ENCODE measurements at regions of chr5 and their contacts with region 1.

Region 1: DNA sequence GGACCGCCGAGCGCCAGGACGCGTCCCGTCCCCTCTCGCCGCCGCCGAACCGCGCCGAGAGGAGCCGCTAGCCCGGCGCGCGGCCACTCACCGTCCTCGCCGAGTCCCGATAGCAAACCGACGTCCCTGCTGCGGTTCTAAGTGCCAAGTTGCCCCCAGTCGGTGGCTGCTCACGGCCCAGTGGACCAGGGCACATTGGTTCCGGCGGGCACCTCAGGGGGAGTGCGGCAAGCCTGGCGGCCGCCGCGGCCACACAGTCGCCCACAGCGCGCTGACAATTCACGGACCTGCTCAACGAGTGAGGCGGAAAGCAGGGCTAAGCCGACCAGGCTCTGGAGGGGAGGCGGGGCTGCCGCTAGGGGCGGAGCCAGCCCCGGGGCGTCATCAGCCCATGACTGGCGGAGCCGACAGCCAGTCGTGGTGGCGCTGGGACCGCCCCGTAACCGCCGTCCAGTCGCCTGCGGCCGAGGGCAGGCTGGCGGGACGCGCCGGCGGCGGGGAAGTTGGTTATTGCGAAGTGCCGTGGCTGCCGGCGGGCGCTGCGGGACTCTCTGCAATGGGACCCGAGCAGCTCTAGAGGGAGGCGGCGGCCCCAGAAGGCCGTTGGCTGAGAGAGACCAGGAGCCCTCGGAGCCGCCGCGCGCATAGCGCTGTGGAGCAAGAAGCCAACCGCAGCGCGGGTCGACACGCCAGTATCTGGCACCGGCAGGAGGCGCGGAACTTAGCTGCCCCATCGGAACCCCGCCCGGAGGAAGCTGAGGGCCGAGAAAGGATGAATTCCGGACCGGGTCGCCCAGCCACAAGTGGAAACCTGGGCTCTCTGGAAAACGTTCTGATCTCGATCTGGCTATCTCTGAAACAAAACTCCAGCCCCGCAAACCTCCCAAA is at the start of gene MARCHF3:
- DNase-seq: peak; percentile 96
- H3K4me3 Mint-ChIP-seq: peak within 1 kb of the TSS; percentile 89
- H3K27ac Mint-ChIP-seq: no peak within 1 kb of the TSS
- H3K4me1 Mint-ChIP-seq: peaks cover 16% of the 10 kb centered on the region
- H3K27me3 Mint-ChIP-seq: peaks cover 3% of the 10 kb centered on the region
- total RNA-seq, gene MARCHF3: 4.0 to 4.4 TPM

Region 2: GRCh38 chr5:126686451-126687126 is 343.9 kb before region 1 on chr5:
- CTCF ChIA-PET with region 1: no interaction called
- POLR2A ChIA-PET with region 1: no interaction called
- intact Hi-C with region 1: loop called (anchors 2 kb)
- DNase-seq: no peak
- H3K4me3 Mint-ChIP-seq: no peak overlapping the region
- H3K27ac Mint-ChIP-seq: no peak overlapping the region
- H3K4me1 Mint-ChIP-seq: peaks cover 11% of the 10 kb centered on the region
- H3K27me3 Mint-ChIP-seq: peaks cover 3% of the 10 kb centered on the region

Region 3: GRCh38 chr5:126852091-126852571 is 178.4 kb before region 1 on chr5:
- CTCF ChIA-PET with region 1: no interaction called
- POLR2A ChIA-PET with region 1: interaction called, 3 read pairs
- intact Hi-C with region 1: loop called (anchors 5 kb)
- DNase-seq: no peak
- H3K4me3 Mint-ChIP-seq: no peak overlapping the region
- H3K27ac Mint-ChIP-seq: peak overlapping the region; percentile 65
- H3K4me1 Mint-ChIP-seq: peaks cover 42% of the 10 kb centered on the region
- H3K27me3 Mint-ChIP-seq: no peaks in the 10 kb centered on the region

Region 4: DNA sequence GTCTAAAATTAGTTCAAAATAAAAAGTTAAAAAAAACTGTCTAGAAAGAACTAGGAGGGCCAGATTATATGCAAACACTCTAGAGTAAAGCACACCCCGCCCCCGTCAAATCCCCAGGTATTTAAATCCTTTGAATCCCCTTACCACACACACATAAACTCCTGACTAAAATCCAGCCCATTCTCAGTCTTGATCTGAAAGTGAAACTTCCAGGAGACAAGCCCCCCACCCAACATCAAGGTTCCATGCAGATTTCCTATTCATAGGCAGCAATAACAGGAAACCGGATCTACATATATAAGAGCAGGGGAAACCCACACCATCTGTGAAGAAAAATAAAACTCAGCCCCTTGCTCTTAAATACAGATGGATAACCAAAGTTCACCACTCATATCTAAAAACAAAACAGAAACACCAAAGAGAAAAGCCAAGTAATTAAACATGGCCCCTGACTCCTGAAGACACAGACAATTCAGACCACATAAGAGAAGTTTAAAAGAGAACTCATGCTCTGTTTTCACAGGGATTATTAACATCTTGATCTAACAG is 42.4 kb before region 1 on chr5:
- CTCF ChIA-PET with region 1: interaction called, 4 read pairs
- POLR2A ChIA-PET with region 1: no interaction called
- intact Hi-C with region 1: loop called (anchors 1 kb)
- DNase-seq: peak; percentile 50
- H3K4me3 Mint-ChIP-seq: peak overlapping the region; percentile 31
- H3K27ac Mint-ChIP-seq: peak overlapping the region; percentile 76
- H3K4me1 Mint-ChIP-seq: peaks cover 22% of the 10 kb centered on the region
- H3K27me3 Mint-ChIP-seq: no peaks in the 10 kb centered on the region

Region 5: GRCh38 chr5:127060470-127060985 is 30.0 kb after region 1 on chr5:
- CTCF ChIA-PET with region 1: no interaction called
- POLR2A ChIA-PET with region 1: no interaction called
- intact Hi-C with region 1: no loop called
- DNase-seq: no peak
- H3K4me3 Mint-ChIP-seq: no peak overlapping the region
- H3K27ac Mint-ChIP-seq: no peak overlapping the region
- H3K4me1 Mint-ChIP-seq: peaks cover 4% of the 10 kb centered on the region
- H3K27me3 Mint-ChIP-seq: no peaks in the 10 kb centered on the region

Region 6: GRCh38 chr5:127072861-127073846 is 42.7 kb after region 1 on chr5 and contains the start of gene C5orf63:
- CTCF ChIA-PET with region 1: interaction called, 4 read pairs
- POLR2A ChIA-PET with region 1: interaction called, 6 read pairs
- intact Hi-C with region 1: loop called (anchors 1 kb)
- DNase-seq: peak; percentile 86
- H3K4me3 Mint-ChIP-seq: peak within 1 kb of the TSS; percentile 85
- H3K27ac Mint-ChIP-seq: peak within 1 kb of the TSS; percentile 79
- H3K4me1 Mint-ChIP-seq: peaks cover 10% of the 10 kb centered on the region
- H3K27me3 Mint-ChIP-seq: no peaks in the 10 kb centered on the region
- total RNA-seq, gene C5orf63: 9.4 to 9.7 TPM

Region 7: GRCh38 chr5:127313847-127314473 is 283.5 kb after region 1 on chr5:
- CTCF ChIA-PET with region 1: interaction called, 3 read pairs
- POLR2A ChIA-PET with region 1: no interaction called
- intact Hi-C with region 1: loop called (anchors 10 kb)
- DNase-seq: peak; percentile 76
- H3K4me3 Mint-ChIP-seq: no peak overlapping the region
- H3K27ac Mint-ChIP-seq: no peak overlapping the region
- H3K4me1 Mint-ChIP-seq: peaks cover 2% of the 10 kb centered on the region
- H3K27me3 Mint-ChIP-seq: peaks cover 5% of the 10 kb centered on the region

Region 8: DNA sequence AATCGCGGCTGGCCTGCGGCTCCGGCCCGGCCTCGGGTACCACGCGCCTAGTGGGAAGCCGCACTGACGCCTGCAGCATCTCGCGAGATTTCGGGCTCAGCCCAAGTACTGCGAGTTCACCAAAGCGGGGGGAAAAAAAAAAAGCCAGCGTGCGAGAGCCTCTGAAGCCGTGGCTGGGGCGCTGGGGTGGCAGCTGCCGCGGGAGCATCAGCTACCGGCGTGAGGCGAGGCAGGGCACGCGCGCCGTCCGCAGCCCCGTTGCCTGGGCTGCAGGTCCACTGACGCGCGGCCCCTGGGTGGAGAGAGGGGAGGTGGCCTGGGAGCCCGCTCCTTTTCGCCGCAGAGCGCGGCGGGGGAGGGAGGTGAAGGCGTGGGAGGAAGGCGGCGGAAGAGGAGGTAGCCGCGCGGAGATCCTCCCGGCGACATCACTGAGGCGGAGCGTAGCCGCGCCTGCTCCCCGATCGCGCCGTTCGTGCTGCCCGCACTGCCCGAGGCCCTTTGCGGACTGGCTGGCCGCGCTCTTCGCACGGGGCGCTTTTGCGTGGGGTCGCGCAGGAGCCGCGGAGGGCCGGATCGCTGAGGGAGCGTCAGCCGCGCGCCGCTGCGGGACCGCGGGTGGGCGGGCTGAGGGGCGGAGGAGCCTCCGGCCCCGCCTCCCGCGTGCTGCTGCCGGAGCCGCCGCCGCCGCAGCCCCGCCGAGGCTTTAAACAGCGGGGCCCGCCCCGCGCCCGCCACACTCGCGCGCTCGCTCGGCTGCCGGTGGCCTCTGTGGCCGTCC is 1052.7 kb after region 1 on chr5 and contains the start of gene SLC12A2:
- CTCF ChIA-PET with region 1: no interaction called
- POLR2A ChIA-PET with region 1: no interaction called
- intact Hi-C with region 1: loop called (anchors 2 kb)
- DNase-seq: peak; percentile 92
- H3K4me3 Mint-ChIP-seq: peak within 1 kb of the TSS; percentile 89
- H3K27ac Mint-ChIP-seq: peak within 1 kb of the TSS; percentile 93
- H3K4me1 Mint-ChIP-seq: peaks cover 54% of the 10 kb centered on the region
- H3K27me3 Mint-ChIP-seq: no peaks in the 10 kb centered on the region
- total RNA-seq, gene SLC12A2: 9.7 to 9.9 TPM

Measured in activated CD4-positive, alpha-beta memory T cell treated with anti-CD3 and anti-CD28 coated beads for 36 hours (primary cell).